ENCODE measurements at regions of chr11 and their contacts with region 1.

Region 1: GRCh38 chr11:61899146-61899841 is 7.9 kb upstream of the FADS3 start:
- DNase-seq: no peak
- H3K4me3 ChIP-seq: no peak overlapping the region
- CTCF ChIP-seq: peak; percentile 99

Region 2: GRCh38 chr11:61816736-61817455 is 82.4 kb before region 1 on chr11 and contains the start of gene FADS1:
- CTCF ChIA-PET with region 1: interaction called, 10 read pairs
- POLR2A ChIA-PET with region 1: no interaction called
- DNase-seq: peak; percentile 60
- H3K4me3 ChIP-seq: peak within 1 kb of the TSS; percentile 82
- CTCF ChIP-seq: peak; percentile 89

Region 3: GRCh38 chr11:61871158-61871597 is 28.1 kb before region 1 on chr11:
- CTCF ChIA-PET with region 1: interaction called, 110 read pairs
- POLR2A ChIA-PET with region 1: no interaction called
- DNase-seq: peak; percentile 12
- H3K4me3 ChIP-seq: peak overlapping the region; percentile 21
- CTCF ChIP-seq: peak; percentile 97

Region 4: DNA sequence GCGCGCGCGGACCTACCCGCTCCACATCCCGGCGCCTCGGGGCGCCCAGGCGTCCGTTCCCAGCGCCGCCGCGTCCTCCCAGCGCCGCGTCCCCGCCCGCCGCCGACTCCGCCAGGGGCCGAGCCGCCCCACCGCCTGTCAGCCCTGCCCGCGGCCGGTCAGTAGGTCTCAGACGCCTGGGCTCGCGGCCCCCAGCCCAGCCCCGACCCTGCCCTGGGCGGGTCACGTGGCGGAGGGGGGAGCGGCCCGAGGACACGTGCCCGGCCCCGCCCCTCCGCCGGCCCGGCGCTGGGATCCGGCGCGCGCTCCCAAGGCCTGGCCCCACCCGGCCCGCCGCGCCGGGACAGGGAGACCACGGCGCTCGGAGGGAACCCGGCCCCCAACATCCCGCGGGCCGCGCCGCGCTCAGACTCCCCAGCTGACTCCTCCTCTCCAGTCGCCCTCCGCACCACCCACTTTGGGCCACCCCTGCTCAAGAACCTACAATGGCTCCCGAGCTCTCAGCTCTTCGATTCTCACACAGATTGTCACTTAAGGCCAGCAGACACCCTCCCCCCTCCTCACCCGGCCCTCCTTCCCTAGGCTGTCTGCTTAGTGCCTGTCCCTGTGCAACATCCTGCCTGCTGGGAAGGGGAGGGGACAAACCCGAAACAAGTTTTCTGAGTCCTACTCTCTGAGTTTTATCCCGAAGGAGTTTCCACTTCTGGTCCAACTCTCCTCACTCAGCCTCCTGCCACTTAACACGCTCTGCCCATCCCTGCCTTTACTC is 18.2 kb after region 1 on chr11 and contains the start of gene RAB3IL1:
- CTCF ChIA-PET with region 1: interaction called, 245 read pairs
- POLR2A ChIA-PET with region 1: no interaction called
- DNase-seq: no peak
- H3K4me3 ChIP-seq: peak within 1 kb of the TSS; percentile 58
- CTCF ChIP-seq: no peak

Region 5: DNA sequence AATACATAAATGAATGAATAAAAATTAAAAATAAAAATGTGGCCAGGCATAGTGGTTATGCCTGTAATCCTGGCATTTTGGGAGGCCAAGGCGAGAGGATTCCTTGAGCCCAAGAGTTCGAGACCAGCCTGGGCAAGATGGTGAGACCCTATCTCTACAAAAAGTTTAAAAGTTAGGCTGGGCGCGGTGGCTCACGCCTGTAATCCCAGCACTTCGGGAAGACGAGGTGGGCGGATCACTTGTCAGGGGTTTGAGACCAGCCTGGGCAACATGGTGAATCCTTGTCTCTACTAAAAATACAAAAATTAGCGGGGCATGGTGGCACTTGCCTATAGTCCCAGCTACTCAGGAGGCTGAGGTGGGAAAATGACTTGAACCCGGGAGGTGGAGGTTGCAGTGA is 41.2 kb after region 1 on chr11:
- CTCF ChIA-PET with region 1: interaction called, 568 read pairs
- POLR2A ChIA-PET with region 1: no interaction called
- DNase-seq: no peak
- H3K4me3 ChIP-seq: no peak overlapping the region
- CTCF ChIP-seq: no peak

Region 6: DNA sequence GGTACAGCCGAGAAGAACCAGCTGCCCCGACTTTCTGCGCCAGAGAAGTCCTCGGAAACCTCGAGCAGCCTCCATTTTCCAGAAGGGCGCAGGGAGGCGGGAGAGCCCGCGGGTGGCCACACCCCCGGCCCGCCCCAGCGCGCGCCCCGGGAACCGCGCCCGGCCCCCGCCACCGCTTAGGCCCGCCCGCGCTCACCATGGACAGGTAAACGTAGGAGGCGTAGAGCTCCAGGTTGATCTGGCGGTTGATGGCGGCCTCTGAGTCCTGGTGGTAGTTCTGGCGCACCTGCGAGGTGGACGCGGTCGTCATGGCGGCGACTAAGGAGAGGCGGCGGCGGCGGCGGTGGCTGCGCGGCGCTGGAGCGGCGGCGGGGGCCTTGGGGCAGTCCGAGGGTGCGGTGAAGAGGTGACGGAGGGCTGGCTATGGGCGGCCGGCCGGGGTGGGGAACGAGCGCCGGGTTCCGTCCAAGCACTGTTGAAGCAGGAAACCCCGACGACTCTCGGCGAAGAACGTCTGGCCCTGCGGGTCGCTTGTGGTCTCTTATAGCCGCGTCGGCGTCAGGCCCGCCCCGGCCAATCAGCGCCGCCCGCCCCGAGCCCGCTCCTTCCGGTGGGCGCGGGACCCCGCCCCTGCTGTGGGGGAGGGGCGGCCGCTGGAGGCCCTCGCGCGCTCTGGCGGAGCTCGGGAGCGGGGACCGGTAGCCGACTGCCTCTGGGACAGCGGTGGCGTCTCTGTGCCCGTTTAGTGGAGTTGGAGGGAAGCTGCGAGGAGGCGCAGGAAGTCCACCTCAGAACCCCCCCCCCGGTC is 68.0 kb after region 1 on chr11 and contains the start of gene FTH1:
- CTCF ChIA-PET with region 1: interaction called, 73 read pairs
- POLR2A ChIA-PET with region 1: no interaction called
- DNase-seq: no peak
- H3K4me3 ChIP-seq: peak within 1 kb of the TSS; percentile 98
- CTCF ChIP-seq: no peak

Region 7: GRCh38 chr11:62018981-62019664 is 119.8 kb after region 1 on chr11:
- CTCF ChIA-PET with region 1: no interaction called
- POLR2A ChIA-PET with region 1: no interaction called
- DNase-seq: no peak
- H3K4me3 ChIP-seq: no peak overlapping the region
- CTCF ChIP-seq: no peak

Region 8: GRCh38 chr11:62108017-62108750 is 208.9 kb after region 1 on chr11:
- CTCF ChIA-PET with region 1: interaction called, 258 read pairs
- POLR2A ChIA-PET with region 1: no interaction called
- DNase-seq: no peak
- H3K4me3 ChIP-seq: no peak overlapping the region
- CTCF ChIP-seq: peak; percentile 53